ENCODE measurements at regions of chr5 and their contacts with region 1.

Region 1: GRCh38 chr5:43631182-43631910 is 28.4 kb downstream of the NNT start:
- DNase-seq: peak; percentile 48
- H3K4me3 ChIP-seq: peak overlapping the region in 1 of 2 experiments; percentile 21; a peak in 1 of 4 replicates
- H3K27ac ChIP-seq: no peak overlapping the region
- H3K4me1 ChIP-seq: peaks cover 0 to 4% of the 10 kb centered on the region in 2 experiments; a peak in 1 of 4 replicates
- H3K27me3 ChIP-seq: no peaks in the 10 kb centered on the region
- CTCF ChIP-seq: peak; percentile 83
- EP300 ChIP-seq: no peak
- RAD21 ChIP-seq: peak; percentile 75

Region 2: GRCh38 chr5:43215073-43215631 is 416.2 kb before region 1 on chr5:
- CTCF ChIA-PET with region 1: no interaction called
- POLR2A ChIA-PET with region 1: no interaction called
- DNase-seq: no peak
- H3K4me3 ChIP-seq: no peak overlapping the region
- H3K27ac ChIP-seq: no peak overlapping the region
- H3K4me1 ChIP-seq: no peaks in the 10 kb centered on the region
- H3K27me3 ChIP-seq: peaks cover 3% of the 10 kb centered on the region; the same call in 1 of the 2 replicates
- CTCF ChIP-seq: no peak
- EP300 ChIP-seq: no peak
- RAD21 ChIP-seq: no peak

Region 3: GRCh38 chr5:43642428-43642827 is 11.1 kb after region 1 on chr5:
- CTCF ChIA-PET with region 1: interaction called, 23 read pairs
- POLR2A ChIA-PET with region 1: interaction called, 3 read pairs
- DNase-seq: no peak
- H3K4me3 ChIP-seq: no peak overlapping the region
- H3K27ac ChIP-seq: no peak overlapping the region
- H3K4me1 ChIP-seq: peaks cover 0 to 3% of the 10 kb centered on the region in 2 experiments; a peak in 2 of 4 replicates
- H3K27me3 ChIP-seq: no peaks in the 10 kb centered on the region
- CTCF ChIP-seq: no peak
- EP300 ChIP-seq: no peak
- RAD21 ChIP-seq: no peak

Region 4: GRCh38 chr5:43661102-43661501 is 29.8 kb after region 1 on chr5:
- CTCF ChIA-PET with region 1: interaction called, 11 read pairs
- POLR2A ChIA-PET with region 1: no interaction called
- DNase-seq: peak; percentile 13
- H3K4me3 ChIP-seq: no peak overlapping the region
- H3K27ac ChIP-seq: no peak overlapping the region
- H3K4me1 ChIP-seq: no peaks in the 10 kb centered on the region
- H3K27me3 ChIP-seq: no peaks in the 10 kb centered on the region
- CTCF ChIP-seq: peak; percentile 66
- EP300 ChIP-seq: no peak
- RAD21 ChIP-seq: peak; percentile 58

Region 5: GRCh38 chr5:43729846-43730478 is 98.6 kb after region 1 on chr5:
- CTCF ChIA-PET with region 1: interaction called, 11 read pairs
- POLR2A ChIA-PET with region 1: no interaction called
- DNase-seq: no peak
- H3K4me3 ChIP-seq: no peak overlapping the region
- H3K27ac ChIP-seq: no peak overlapping the region
- H3K4me1 ChIP-seq: no peaks in the 10 kb centered on the region
- H3K27me3 ChIP-seq: no peaks in the 10 kb centered on the region
- CTCF ChIP-seq: peak; percentile 74
- EP300 ChIP-seq: no peak
- RAD21 ChIP-seq: peak; percentile 63